PC-9 (cell line): ENCODE measurements at regions of chr6 and their contacts with region 1.

Region 1: GRCh38 chr6:23590498-23591126 is 535.4 kb upstream of the NRSN1 start:
- DNase-seq: no peak
- H3K4me3 ChIP-seq: no peak overlapping the region
- H3K27ac ChIP-seq: no peak overlapping the region
- H3K4me1 ChIP-seq: no peaks in the 10 kb centered on the region
- H3K27me3 ChIP-seq: no peaks in the 10 kb centered on the region
- CTCF ChIP-seq: no peak

Region 2: GRCh38 chr6:23735151-23735550 is 144.5 kb after region 1 on chr6:
- CTCF ChIA-PET with region 1: no interaction called
- POLR2A ChIA-PET with region 1: no interaction called
- intact Hi-C with region 1: no loop called
- DNase-seq: no peak
- H3K4me3 ChIP-seq: no peak overlapping the region
- H3K27ac ChIP-seq: no peak overlapping the region
- H3K4me1 ChIP-seq: no peaks in the 10 kb centered on the region
- H3K27me3 ChIP-seq: no peaks in the 10 kb centered on the region
- CTCF ChIP-seq: no peak

Region 3: GRCh38 chr6:24078200-24078599 is 487.6 kb after region 1 on chr6:
- CTCF ChIA-PET with region 1: no interaction called
- POLR2A ChIA-PET with region 1: interaction called, 13 read pairs
- intact Hi-C with region 1: no loop called
- DNase-seq: no peak
- H3K4me3 ChIP-seq: no peak overlapping the region
- H3K27ac ChIP-seq: no peak overlapping the region
- H3K4me1 ChIP-seq: no peaks in the 10 kb centered on the region
- H3K27me3 ChIP-seq: no peaks in the 10 kb centered on the region
- CTCF ChIP-seq: no peak